Breast epithelium (tissue), 4 donors: ENCODE measurements at regions of chr7 and their contacts with region 1.

Region 1: GRCh38 chr7:141397236-141398163 is 153.7 kb upstream of the AGK start:
- DNase-seq: no peak
- H3K4me3 ChIP-seq: no peak overlapping the region
- H3K27ac ChIP-seq: no peak overlapping the region
- H3K4me1 ChIP-seq: no peaks in the 10 kb centered on the region
- H3K27me3 ChIP-seq: no peaks in the 10 kb centered on the region
- CTCF ChIP-seq: no peak
- POLR2A ChIP-seq: no peak

Region 2: GRCh38 chr7:139823959-139824521 is 1573.5 kb before region 1 on chr7:
- intact Hi-C with region 1: loop called (anchors 5 kb)
- DNase-seq: no peak
- H3K4me3 ChIP-seq: no peak overlapping the region
- H3K27ac ChIP-seq: no peak overlapping the region
- H3K4me1 ChIP-seq: no peaks in the 10 kb centered on the region
- H3K27me3 ChIP-seq: peaks cover 0 to 4% of the 10 kb centered on the region in 2 donors
- CTCF ChIP-seq: no peak
- POLR2A ChIP-seq: no peak